Cardiac septum (tissue), 1 donor: ENCODE measurements at regions of chr17 and their contacts with region 1.

Region 1: DNA sequence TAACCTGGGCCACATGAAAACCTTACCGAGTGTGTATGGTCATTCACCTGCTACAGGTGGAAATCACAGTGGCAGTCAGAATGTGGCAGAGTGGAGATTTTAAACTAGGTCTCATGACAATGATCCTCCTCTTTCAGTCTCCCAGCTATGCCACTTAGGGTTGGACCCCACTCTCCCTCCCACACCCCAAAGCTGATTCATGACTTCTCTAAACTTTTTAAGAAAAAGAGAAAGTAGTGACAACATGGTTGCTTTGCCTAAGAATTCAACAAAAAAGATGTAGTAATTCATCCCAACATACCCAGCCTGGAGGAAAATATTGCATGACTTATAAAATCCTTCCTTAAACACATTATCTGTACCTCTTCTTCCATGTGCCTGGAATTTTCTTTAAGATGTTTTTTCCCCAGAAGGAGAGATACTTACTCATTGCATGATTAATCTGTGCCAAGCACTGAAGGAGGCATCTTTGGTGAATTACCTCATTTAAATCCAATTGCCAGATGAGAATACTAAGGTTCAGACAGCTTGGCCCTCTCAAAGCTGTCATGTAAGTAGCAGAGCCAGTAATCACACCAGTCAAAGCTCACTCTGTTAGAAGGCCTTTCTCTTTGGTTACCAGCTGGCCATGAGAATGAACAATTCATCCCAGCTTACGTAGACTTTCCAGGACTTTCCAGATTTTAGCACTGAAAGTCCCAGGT is 119.9 kb downstream of the COPRS start:
- DNase-seq: no peak

Region 2: GRCh38 chr17:31558748-31559644 is 180.2 kb before region 1 on chr17:
- intact Hi-C with region 1: loop called (anchors 5 kb)
- DNase-seq: peak; percentile 91

Region 3: DNA sequence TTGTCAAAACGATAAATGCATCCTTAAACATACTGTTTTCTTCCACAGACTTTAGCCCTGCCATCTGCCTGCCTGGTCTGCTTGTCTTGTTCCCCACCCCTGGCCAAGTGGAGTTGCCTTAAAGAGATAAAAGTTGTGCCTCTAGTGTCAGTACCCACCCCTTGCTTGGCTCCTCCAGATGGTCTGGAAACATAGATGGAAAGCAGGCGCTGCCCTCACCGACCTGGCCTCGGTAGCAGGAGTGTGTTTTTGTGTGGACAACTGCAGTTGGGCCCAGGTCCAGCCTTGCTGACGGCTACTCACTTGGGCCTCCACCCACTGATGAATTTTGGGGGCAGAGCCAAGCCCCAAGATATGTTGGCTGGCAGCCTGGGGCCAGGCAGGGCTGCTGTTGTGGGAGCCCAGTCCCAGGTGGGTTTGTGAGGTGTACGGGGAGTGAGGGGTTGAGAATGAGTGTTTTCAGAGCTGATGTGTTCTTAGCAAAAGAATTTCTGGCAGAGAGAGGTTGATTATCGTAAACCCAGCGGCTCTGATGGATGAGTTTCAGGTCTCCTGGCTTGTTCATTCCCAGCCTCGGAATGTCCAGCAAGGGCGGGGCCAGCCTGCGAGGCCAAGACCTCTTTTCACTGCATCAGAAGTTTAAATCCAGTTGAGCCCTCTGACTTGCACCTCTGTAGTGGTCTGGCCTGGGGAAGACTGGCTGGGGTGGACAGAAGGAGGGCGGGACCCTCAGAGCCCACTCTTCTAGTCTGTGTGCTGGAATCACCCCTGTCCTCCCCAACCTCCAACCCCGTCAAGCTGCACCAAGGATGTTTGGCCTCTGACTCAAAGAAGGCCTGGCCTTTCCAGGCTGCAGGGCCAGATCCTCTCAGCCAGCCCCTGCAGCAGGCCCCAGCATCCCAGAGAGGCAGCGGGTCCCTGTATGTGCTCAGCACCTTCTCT is 167.9 kb before region 1 on chr17:
- intact Hi-C with region 1: loop called (anchors 5 kb)
- DNase-seq: peak; percentile 90

Region 4: GRCh38 chr17:31596382-31597323 is 142.5 kb before region 1 on chr17:
- intact Hi-C with region 1: loop called (anchors 5 kb)
- DNase-seq: peak; percentile 92

Region 5: DNA sequence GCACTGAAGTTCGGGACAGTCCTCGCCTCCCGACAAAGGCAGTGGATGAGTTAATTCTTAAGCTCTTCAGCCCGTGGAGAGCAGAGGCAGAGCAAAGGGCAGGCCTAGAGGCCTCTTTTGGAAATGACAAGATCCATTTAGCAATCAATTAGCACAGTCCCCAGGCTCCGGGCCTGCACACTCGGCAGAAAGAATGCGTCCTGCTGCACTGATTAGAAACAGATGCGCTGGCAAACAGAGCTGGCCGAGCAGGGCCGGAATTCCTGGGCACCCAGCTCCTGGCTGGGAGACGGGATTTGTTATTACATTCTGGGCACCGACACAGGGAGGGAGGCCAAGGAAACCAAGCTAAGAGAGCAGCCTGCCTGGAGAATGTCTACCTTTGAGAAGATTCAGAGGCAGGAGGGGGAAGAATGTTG is 43.0 kb before region 1 on chr17:
- intact Hi-C with region 1: loop called (anchors 1 kb)
- DNase-seq: peak; percentile 88

Region 6: GRCh38 chr17:31778523-31778922 is 39.4 kb after region 1 on chr17:
- intact Hi-C with region 1: no loop called
- DNase-seq: no peak